PC-3 (cell line): ENCODE measurements at regions of chr2 and their contacts with region 1.

Region 1: DNA sequence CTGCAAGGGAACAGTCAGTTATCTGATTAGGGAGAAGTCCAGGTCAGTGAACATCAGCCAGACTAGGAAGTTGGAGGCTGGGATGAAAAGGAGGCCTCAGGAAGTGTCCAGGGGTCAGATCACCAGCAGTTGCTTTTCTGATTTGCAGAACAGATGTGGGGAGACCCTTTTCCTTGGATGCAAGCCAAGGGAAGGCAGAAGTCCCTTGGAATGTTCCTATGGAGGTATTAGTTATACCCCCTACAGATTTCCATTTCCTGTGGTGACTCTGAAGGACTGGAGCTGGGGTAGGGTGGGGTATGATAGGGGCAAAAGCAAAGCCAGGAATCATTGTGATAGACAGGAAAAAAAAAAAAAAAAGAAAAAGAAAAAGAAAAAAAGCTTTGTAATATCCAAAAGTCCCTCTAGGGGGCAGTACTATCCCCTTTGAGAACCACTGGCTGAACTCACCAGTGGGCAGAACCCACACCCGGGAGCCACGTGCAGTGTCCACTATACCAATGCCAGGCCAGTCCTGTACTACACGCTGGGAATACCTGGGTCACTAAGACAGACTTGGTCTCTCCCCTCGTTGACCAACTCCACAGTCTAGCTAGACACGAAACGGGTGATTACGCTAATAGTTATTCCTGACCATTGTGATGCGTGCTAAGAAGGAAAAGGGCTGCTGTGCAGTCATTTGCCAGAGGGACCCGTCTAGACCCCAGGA is 7.4 kb downstream of the DYSF start:
- DNase-seq: peak; percentile 48
- ATAC-seq: peak; percentile 33; the same call in 1 of the 2 replicates
- H3K4me3 ChIP-seq: no peak overlapping the region
- H3K27ac ChIP-seq: no peak overlapping the region
- H3K4me1 ChIP-seq: peaks cover 11% of the 10 kb centered on the region; the same call in 1 of the 2 replicates
- H3K27me3 ChIP-seq: no peaks in the 10 kb centered on the region
- CTCF ChIP-seq: peak; percentile 66

Region 2: DNA sequence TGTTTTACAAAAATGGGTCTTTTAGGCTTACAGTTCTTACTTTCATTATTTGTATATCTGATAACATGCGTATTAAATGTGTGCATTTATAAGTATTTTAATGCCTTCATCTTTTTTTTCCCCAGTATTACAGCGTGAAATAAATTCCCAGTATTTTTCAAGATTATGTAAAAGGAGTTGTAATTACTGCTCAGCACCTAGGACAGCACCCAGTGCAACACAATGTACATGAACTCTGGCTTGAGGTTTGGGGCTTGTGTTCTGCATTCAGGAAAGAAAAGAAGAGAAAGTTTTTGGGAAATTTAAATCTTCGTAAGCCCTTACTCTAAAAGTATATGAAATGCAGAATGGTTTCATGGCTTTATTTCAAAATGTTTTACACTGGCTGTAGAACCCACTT is 112.4 kb before region 1 on chr2:
- CTCF ChIA-PET with region 1: no interaction called
- POLR2A ChIA-PET with region 1: no interaction called
- intact Hi-C with region 1: no loop called
- DNase-seq: peak; percentile 39
- ATAC-seq: no peak
- H3K4me3 ChIP-seq: no peak overlapping the region
- H3K27ac ChIP-seq: no peak overlapping the region
- H3K4me1 ChIP-seq: no peaks in the 10 kb centered on the region
- H3K27me3 ChIP-seq: no peaks in the 10 kb centered on the region
- CTCF ChIP-seq: no peak

Region 3: DNA sequence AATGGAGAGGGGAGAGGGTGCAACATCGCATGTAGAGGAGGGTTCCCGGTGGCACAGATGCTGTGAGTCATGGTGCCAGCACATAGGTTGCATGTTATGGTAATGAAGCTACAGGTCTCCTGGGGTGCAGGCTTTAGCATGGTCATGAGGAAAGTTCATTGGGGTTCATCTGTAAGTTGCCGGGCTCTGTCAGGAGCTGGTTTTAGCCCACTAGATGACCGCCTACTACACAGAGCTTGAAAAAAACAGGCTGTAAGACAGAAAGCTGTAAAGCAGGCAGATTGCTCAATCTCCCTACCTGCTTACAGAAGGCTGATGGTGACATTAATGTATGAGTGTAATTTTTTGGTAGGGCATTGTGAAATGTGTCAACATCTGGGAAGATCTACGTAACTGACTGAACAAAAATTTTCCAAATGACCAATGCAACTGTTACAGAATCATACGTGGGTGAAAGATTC is 16.5 kb after region 1 on chr2:
- CTCF ChIA-PET with region 1: no interaction called
- POLR2A ChIA-PET with region 1: no interaction called
- intact Hi-C with region 1: no loop called
- DNase-seq: peak; percentile 40
- ATAC-seq: no peak
- H3K4me3 ChIP-seq: no peak overlapping the region
- H3K27ac ChIP-seq: no peak overlapping the region
- H3K4me1 ChIP-seq: peaks cover 19% of the 10 kb centered on the region
- H3K27me3 ChIP-seq: no peaks in the 10 kb centered on the region
- CTCF ChIP-seq: no peak

Region 4: GRCh38 chr2:71498261-71498701 is 37.5 kb after region 1 on chr2:
- CTCF ChIA-PET with region 1: no interaction called
- POLR2A ChIA-PET with region 1: interaction called, 11 read pairs
- intact Hi-C with region 1: no loop called
- DNase-seq: peak; percentile 97
- ATAC-seq: peak; percentile 96
- H3K4me3 ChIP-seq: peak overlapping the region; percentile 42; the same call in 1 of the 2 replicates
- H3K27ac ChIP-seq: peak overlapping the region; percentile 86
- H3K4me1 ChIP-seq: peaks cover 42% of the 10 kb centered on the region
- H3K27me3 ChIP-seq: no peaks in the 10 kb centered on the region
- CTCF ChIP-seq: no peak